Mammary epithelial cell (primary cell): ENCODE measurements at regions of chr6 and their contacts with region 1.

Region 1: GRCh38 chr6:154613137-154613676 is 102.7 kb upstream of the CNKSR3 start:
- DNase-seq: peak; percentile 92
- H3K4me3 ChIP-seq: no peak overlapping the region
- H3K27ac ChIP-seq: no peak overlapping the region
- H3K4me1 ChIP-seq: peaks cover 8% of the 10 kb centered on the region
- H3K27me3 ChIP-seq: no peaks in the 10 kb centered on the region
- CTCF ChIP-seq: no peak

Region 2: GRCh38 chr6:154555073-154555677 is 58.0 kb before region 1 on chr6:
- CTCF ChIA-PET with region 1: no interaction called
- dilution Hi-C with region 1: loop called (anchors 5 kb)
- in situ Hi-C with region 1: no loop called
- intact Hi-C with region 1: no loop called
- DNase-seq: peak; percentile 91
- H3K4me3 ChIP-seq: no peak overlapping the region
- H3K27ac ChIP-seq: no peak overlapping the region
- H3K4me1 ChIP-seq: peaks cover 4% of the 10 kb centered on the region
- H3K27me3 ChIP-seq: no peaks in the 10 kb centered on the region
- CTCF ChIP-seq: no peak

Region 3: GRCh38 chr6:154624038-154624599 is 10.9 kb after region 1 on chr6:
- CTCF ChIA-PET with region 1: no interaction called
- dilution Hi-C with region 1: no loop called
- in situ Hi-C with region 1: no loop called
- intact Hi-C with region 1: no loop called
- DNase-seq: no peak
- H3K4me3 ChIP-seq: no peak overlapping the region
- H3K27ac ChIP-seq: no peak overlapping the region
- H3K4me1 ChIP-seq: peaks cover 8% of the 10 kb centered on the region
- H3K27me3 ChIP-seq: no peaks in the 10 kb centered on the region
- CTCF ChIP-seq: no peak